ENCODE measurements at regions of chr4 and their contacts with region 1.

Region 1: DNA sequence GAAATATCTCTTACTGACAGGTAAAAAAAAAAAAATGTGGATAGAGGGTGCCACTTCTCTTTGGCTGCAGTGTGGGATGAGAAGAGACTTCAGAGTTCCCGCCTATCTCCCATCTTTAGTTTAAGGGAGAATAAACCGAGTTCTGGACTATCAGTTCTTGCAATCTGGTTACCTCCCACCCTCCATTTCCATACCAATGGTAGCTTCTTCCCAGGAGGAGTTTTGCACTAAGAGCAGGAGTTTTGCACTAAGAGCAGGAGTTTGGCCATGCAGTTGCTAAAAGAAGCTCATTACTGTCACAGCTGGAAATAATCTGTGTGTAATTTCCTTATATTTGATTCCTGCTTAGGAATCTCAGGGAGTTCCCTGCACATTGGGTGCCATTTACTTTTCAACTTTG is 10.8 kb upstream of the GUCY1B1 start:
- DNase-seq: no peak
- ATAC-seq: no peak
- H3K4me3 ChIP-seq: no peak overlapping the region
- H3K27ac ChIP-seq: no peak overlapping the region
- H3K4me1 ChIP-seq: no peaks in the 10 kb centered on the region
- H3K27me3 ChIP-seq: no peaks in the 10 kb centered on the region
- CTCF ChIP-seq: no peak
- EP300 ChIP-seq: no peak
- POLR2A ChIP-seq: no peak
- RAD21 ChIP-seq: no peak

Region 2: GRCh38 chr4:155734065-155734464 is 14.0 kb before region 1 on chr4:
- CTCF ChIA-PET with region 1: interaction called, 4 read pairs
- POLR2A ChIA-PET with region 1: interaction called, 3 read pairs
- RAD21 ChIA-PET with region 1: interaction called, 5 read pairs
- SMC1A ChIA-PET with region 1: interaction called, 11 read pairs
- in situ Hi-C with region 1: no loop called
- intact Hi-C with region 1: no loop called
- DNase-seq: no peak
- ATAC-seq: no peak
- H3K4me3 ChIP-seq: no peak overlapping the region
- H3K27ac ChIP-seq: no peak overlapping the region
- H3K4me1 ChIP-seq: no peaks in the 10 kb centered on the region
- H3K27me3 ChIP-seq: no peaks in the 10 kb centered on the region
- CTCF ChIP-seq: no peak
- EP300 ChIP-seq: no peak
- POLR2A ChIP-seq: no peak
- RAD21 ChIP-seq: no peak

Region 3: DNA sequence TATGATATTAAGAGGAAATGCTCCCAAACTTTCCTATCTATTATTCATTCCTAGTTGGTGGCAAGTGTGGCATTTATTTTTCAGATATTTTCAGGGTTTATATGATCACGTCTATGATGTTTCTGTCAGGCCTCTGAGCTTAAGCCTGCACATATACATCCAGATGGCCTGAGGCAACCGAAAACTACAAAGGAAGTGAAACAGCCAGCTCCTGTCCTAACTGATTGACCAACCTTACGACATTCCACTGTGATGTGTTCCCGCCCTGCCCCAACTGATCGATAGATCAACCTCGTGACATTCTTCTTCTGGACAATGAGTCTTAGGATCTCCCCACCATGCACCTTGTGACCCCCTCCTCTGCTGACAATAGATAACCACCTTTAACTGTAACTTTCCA is 273.3 kb after region 1 on chr4:
- CTCF ChIA-PET with region 1: no interaction called
- POLR2A ChIA-PET with region 1: no interaction called
- RAD21 ChIA-PET with region 1: no interaction called
- SMC1A ChIA-PET with region 1: no interaction called
- in situ Hi-C with region 1: no loop called
- intact Hi-C with region 1: no loop called
- DNase-seq: no peak
- ATAC-seq: no peak
- H3K4me3 ChIP-seq: no peak overlapping the region
- H3K27ac ChIP-seq: no peak overlapping the region
- H3K4me1 ChIP-seq: no peaks in the 10 kb centered on the region
- H3K27me3 ChIP-seq: no peaks in the 10 kb centered on the region; a peak in 2 of 4 replicates
- CTCF ChIP-seq: no peak
- EP300 ChIP-seq: no peak
- POLR2A ChIP-seq: no peak
- RAD21 ChIP-seq: no peak